CD4-positive, alpha-beta T cell (primary cell): ENCODE measurements at regions of chr10 and their contacts with region 1.

Region 1: GRCh38 chr10:96017191-96017687 is 26.1 kb upstream of the CCNJ start:
- DNase-seq: peak in 8 of 14 experiments; percentile 3 to 74 (median 37)
- ATAC-seq: peak; percentile 86
- H3K4me3 ChIP-seq: no peak overlapping the region
- H3K4me3 Mint-ChIP-seq: no peak overlapping the region
- H3K27ac ChIP-seq: no peak overlapping the region
- H3K27ac Mint-ChIP-seq: no peak overlapping the region
- H3K4me1 ChIP-seq: no peaks in the 10 kb centered on the region
- H3K4me1 Mint-ChIP-seq: no peaks in the 10 kb centered on the region
- H3K27me3 ChIP-seq: no peaks in the 10 kb centered on the region
- H3K27me3 Mint-ChIP-seq: peaks cover 5% of the 10 kb centered on the region
- CTCF ChIP-seq: peak; percentile 80

Region 2: DNA sequence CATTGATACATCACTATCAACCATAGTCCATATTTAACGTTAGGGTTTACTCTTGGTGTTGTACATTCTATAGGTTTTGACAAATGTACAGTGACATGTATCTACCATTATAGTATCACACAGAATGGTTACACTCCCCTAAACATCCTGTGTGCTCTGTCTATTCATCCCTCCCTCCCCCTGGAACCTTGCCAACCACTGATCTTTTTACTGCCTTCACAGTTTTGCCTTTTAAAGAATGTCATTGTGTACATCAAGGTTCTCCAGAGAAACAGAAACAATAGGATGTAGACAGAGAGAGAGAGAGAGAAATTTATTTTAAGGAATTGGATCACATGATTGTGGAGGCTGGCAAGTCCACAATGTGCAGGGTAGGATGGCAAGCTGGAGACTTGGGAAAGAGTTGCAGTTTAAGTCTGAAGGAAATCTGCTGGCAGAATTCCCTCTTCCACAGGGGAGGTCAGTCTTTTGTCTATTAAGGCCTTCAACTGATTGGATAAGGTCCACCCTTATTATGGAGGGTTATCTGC is 18.9 kb before region 1 on chr10:
- CTCF ChIA-PET with region 1: interaction called, 11 read pairs
- POLR2A ChIA-PET with region 1: interaction called, 3 read pairs
- intact Hi-C with region 1: no loop called
- DNase-seq: no peak
- ATAC-seq: no peak
- H3K4me3 ChIP-seq: no peak overlapping the region
- H3K4me3 Mint-ChIP-seq: no peak overlapping the region
- H3K27ac ChIP-seq: no peak overlapping the region
- H3K27ac Mint-ChIP-seq: no peak overlapping the region
- H3K4me1 ChIP-seq: no peaks in the 10 kb centered on the region
- H3K4me1 Mint-ChIP-seq: no peaks in the 10 kb centered on the region
- H3K27me3 ChIP-seq: no peaks in the 10 kb centered on the region
- H3K27me3 Mint-ChIP-seq: no peaks in the 10 kb centered on the region
- CTCF ChIP-seq: no peak

Region 3: DNA sequence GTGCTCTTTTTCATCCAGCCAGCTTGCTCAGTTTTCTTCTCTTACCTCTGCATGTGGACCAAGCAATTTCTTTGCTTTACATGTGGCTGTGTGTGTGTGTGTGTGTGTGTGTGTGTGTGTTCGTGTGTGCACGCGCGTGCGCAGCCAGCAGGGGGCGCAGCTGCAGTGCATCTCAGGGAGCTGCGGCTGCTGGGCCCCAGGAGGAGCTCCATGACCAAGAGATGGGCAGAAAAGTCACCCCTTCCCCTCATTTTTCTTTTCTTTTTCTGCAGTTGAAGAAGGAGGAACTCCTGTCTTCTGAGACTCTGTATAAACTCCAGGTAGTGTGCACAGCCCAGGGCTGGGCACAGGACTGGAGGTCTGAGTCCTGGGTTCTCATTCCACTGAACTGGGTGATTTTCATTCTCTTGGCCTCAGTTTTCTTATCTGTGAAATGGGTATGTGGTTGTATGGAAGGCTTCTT is 212.4 kb after region 1 on chr10:
- CTCF ChIA-PET with region 1: no interaction called
- POLR2A ChIA-PET with region 1: no interaction called
- intact Hi-C with region 1: loop called in 1 of 2 experiments (anchors 5 kb)
- DNase-seq: peak; percentile 46 to 86 (median 68)
- ATAC-seq: peak; percentile 80
- H3K4me3 ChIP-seq: no peak overlapping the region
- H3K4me3 Mint-ChIP-seq: no peak overlapping the region
- H3K27ac ChIP-seq: no peak overlapping the region
- H3K27ac Mint-ChIP-seq: no peak overlapping the region
- H3K4me1 ChIP-seq: no peaks in the 10 kb centered on the region
- H3K4me1 Mint-ChIP-seq: no peaks in the 10 kb centered on the region
- H3K27me3 ChIP-seq: no peaks in the 10 kb centered on the region
- H3K27me3 Mint-ChIP-seq: no peaks in the 10 kb centered on the region
- CTCF ChIP-seq: peak; percentile 54

Region 4: GRCh38 chr10:96257944-96258343 is 240.7 kb after region 1 on chr10:
- CTCF ChIA-PET with region 1: no interaction called
- POLR2A ChIA-PET with region 1: no interaction called
- intact Hi-C with region 1: no loop called
- DNase-seq: peak in 1 of 14 experiments; percentile 6
- ATAC-seq: no peak
- H3K4me3 ChIP-seq: no peak overlapping the region
- H3K4me3 Mint-ChIP-seq: no peak overlapping the region
- H3K27ac ChIP-seq: no peak overlapping the region
- H3K27ac Mint-ChIP-seq: no peak overlapping the region
- H3K4me1 ChIP-seq: no peaks in the 10 kb centered on the region
- H3K4me1 Mint-ChIP-seq: no peaks in the 10 kb centered on the region
- H3K27me3 ChIP-seq: no peaks in the 10 kb centered on the region
- H3K27me3 Mint-ChIP-seq: no peaks in the 10 kb centered on the region
- CTCF ChIP-seq: no peak

Region 5: GRCh38 chr10:96292971-96293920 is 276.0 kb after region 1 on chr10:
- CTCF ChIA-PET with region 1: no interaction called
- POLR2A ChIA-PET with region 1: interaction called, 4 read pairs
- intact Hi-C with region 1: loop called (anchors 1 to 2 kb)
- DNase-seq: peak in 6 of 14 experiments; percentile 2 to 52 (median 24)
- ATAC-seq: no peak
- H3K4me3 ChIP-seq: no peak overlapping the region
- H3K4me3 Mint-ChIP-seq: no peak overlapping the region
- H3K27ac ChIP-seq: no peak overlapping the region
- H3K27ac Mint-ChIP-seq: peak overlapping the region; percentile 5
- H3K4me1 ChIP-seq: peaks cover 7% of the 10 kb centered on the region
- H3K4me1 Mint-ChIP-seq: peaks cover 34% of the 10 kb centered on the region
- H3K27me3 ChIP-seq: no peaks in the 10 kb centered on the region
- H3K27me3 Mint-ChIP-seq: no peaks in the 10 kb centered on the region
- CTCF ChIP-seq: peak; percentile 48

Region 6: GRCh38 chr10:96317067-96317833 is 300.0 kb after region 1 on chr10:
- CTCF ChIA-PET with region 1: no interaction called
- POLR2A ChIA-PET with region 1: no interaction called
- intact Hi-C with region 1: loop called in 1 of 2 experiments (anchors 1 kb)
- DNase-seq: no peak
- ATAC-seq: no peak
- H3K4me3 ChIP-seq: no peak overlapping the region
- H3K4me3 Mint-ChIP-seq: no peak overlapping the region
- H3K27ac ChIP-seq: no peak overlapping the region
- H3K27ac Mint-ChIP-seq: no peak overlapping the region
- H3K4me1 ChIP-seq: no peaks in the 10 kb centered on the region
- H3K4me1 Mint-ChIP-seq: no peaks in the 10 kb centered on the region
- H3K27me3 ChIP-seq: peaks cover 0 to 5% of the 10 kb centered on the region in 2 experiments
- H3K27me3 Mint-ChIP-seq: peaks cover 43% of the 10 kb centered on the region
- CTCF ChIP-seq: no peak

Region 7: GRCh38 chr10:96339957-96340904 is 323.0 kb after region 1 on chr10:
- CTCF ChIA-PET with region 1: no interaction called
- POLR2A ChIA-PET with region 1: no interaction called
- intact Hi-C with region 1: loop called (anchors 1 kb)
- DNase-seq: peak; percentile 28 to 77 (median 46)
- ATAC-seq: peak; percentile 87
- H3K4me3 ChIP-seq: no peak overlapping the region
- H3K4me3 Mint-ChIP-seq: no peak overlapping the region
- H3K27ac ChIP-seq: no peak overlapping the region
- H3K27ac Mint-ChIP-seq: no peak overlapping the region
- H3K4me1 ChIP-seq: no peaks in the 10 kb centered on the region
- H3K4me1 Mint-ChIP-seq: peaks cover under 1% of the 10 kb centered on the region
- H3K27me3 ChIP-seq: no peaks in the 10 kb centered on the region
- H3K27me3 Mint-ChIP-seq: no peaks in the 10 kb centered on the region
- CTCF ChIP-seq: peak; percentile 69